ENCODE measurements at regions of chr17 and their contacts with region 1.

Region 1: DNA sequence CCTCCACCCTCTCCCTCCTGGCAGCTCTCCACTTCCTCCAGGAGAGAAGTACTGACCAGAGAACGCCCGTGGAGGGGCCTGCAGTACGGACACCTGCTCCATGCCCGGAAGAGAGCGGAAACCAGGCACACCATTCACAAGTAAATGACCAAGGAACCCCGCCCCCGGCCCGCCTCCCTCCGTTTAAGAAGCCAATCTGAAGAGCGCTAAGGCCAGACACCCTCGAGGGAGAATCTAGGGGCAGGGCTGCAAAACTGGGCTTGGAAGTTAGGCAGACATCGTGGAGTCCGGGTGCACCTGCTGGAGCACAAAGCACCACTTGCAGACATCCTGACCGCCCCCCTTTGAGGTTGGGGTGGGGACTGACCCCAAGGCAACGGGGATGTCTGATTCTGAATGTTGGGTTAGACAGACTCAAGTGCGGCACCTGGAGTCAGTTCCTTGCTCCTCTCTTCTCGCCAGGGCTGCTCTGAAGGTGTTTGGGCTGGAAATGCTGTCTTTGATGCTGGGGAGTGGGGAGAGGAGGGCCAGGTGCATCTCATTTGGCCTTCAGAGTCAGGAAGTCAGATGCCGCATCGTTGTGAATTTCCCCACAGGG is 964 bp upstream of the FAAP100 start:
- DNase-seq: peak; percentile 71 to 87
- H3K4me3 ChIP-seq: peak overlapping the region; percentile 97
- H3K4me3 Mint-ChIP-seq: peak overlapping the region; percentile 90
- H3K27ac Mint-ChIP-seq: peak overlapping the region; percentile 77
- H3K4me1 ChIP-seq: peaks cover 18% of the 10 kb centered on the region
- H3K4me1 Mint-ChIP-seq: peaks cover 10% of the 10 kb centered on the region
- H3K27me3 ChIP-seq: no peaks in the 10 kb centered on the region
- H3K27me3 Mint-ChIP-seq: no peaks in the 10 kb centered on the region
- CTCF ChIP-seq: no peak

Region 2: GRCh38 chr17:81519284-81519955 is 33.7 kb before region 1 on chr17:
- CTCF ChIA-PET with region 1: interaction called, 5 read pairs
- POLR2A ChIA-PET with region 1: interaction called, 4 read pairs
- intact Hi-C with region 1: loop called (anchors 1 kb)
- DNase-seq: peak; percentile 88 to 93
- H3K4me3 ChIP-seq: peak overlapping the region; percentile 74
- H3K4me3 Mint-ChIP-seq: peak overlapping the region; percentile 77
- H3K27ac Mint-ChIP-seq: peak overlapping the region; percentile 74
- H3K4me1 ChIP-seq: peaks cover 33% of the 10 kb centered on the region
- H3K4me1 Mint-ChIP-seq: peaks cover 20% of the 10 kb centered on the region
- H3K27me3 ChIP-seq: no peaks in the 10 kb centered on the region
- H3K27me3 Mint-ChIP-seq: no peaks in the 10 kb centered on the region
- CTCF ChIP-seq: peak; percentile 66 to 92

Region 3: DNA sequence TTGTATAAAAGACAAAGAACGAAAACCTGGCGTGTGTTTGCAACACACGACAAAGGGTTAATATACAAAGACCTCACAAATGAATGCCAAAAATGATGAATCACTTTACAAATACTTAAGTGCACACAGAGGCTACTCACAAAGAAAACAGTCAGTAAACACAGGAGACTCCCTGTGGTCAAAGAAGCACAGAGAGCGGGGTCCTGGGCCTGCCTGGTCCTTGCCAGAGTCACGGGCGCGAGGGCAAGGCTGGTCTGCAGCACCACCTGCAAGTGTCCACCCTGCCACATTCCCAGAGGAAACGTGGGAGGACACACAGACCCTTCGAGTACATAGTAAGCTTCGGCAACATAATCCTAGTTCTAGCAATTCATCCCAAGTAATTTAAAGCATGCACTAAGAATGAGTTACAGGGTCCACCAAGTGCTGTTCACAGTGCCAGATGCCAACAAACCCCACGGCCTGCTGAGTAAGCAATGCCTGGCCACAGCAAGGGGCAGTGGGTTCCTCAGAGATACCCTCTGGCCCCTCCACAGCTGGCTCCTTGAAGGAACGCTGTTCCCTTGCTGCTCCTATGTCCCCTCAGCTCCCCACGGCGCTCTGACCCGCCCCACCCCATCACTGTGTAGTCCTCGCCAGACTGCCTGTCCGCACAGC is 23.6 kb after region 1 on chr17:
- CTCF ChIA-PET with region 1: no interaction called
- POLR2A ChIA-PET with region 1: no interaction called
- intact Hi-C with region 1: loop called (anchors 1 kb)
- DNase-seq: peak in 1 of 2 experiments; percentile 42
- H3K4me3 ChIP-seq: no peak overlapping the region
- H3K4me3 Mint-ChIP-seq: peak overlapping the region; percentile 28
- H3K27ac Mint-ChIP-seq: peak overlapping the region; percentile 66
- H3K4me1 ChIP-seq: peaks cover 25% of the 10 kb centered on the region
- H3K4me1 Mint-ChIP-seq: peaks cover 51% of the 10 kb centered on the region
- H3K27me3 ChIP-seq: no peaks in the 10 kb centered on the region
- H3K27me3 Mint-ChIP-seq: no peaks in the 10 kb centered on the region
- CTCF ChIP-seq: no peak

Region 4: GRCh38 chr17:81601525-81602120 is 48.5 kb after region 1 on chr17:
- CTCF ChIA-PET with region 1: no interaction called
- POLR2A ChIA-PET with region 1: no interaction called
- intact Hi-C with region 1: loop called (anchors 2 kb)
- DNase-seq: peak; percentile 59 to 69
- H3K4me3 ChIP-seq: no peak overlapping the region
- H3K4me3 Mint-ChIP-seq: no peak overlapping the region
- H3K27ac Mint-ChIP-seq: no peak overlapping the region
- H3K4me1 ChIP-seq: no peaks in the 10 kb centered on the region
- H3K4me1 Mint-ChIP-seq: no peaks in the 10 kb centered on the region
- H3K27me3 ChIP-seq: no peaks in the 10 kb centered on the region
- H3K27me3 Mint-ChIP-seq: no peaks in the 10 kb centered on the region
- CTCF ChIP-seq: peak; percentile 78 to 82

Measured in Caco-2 (cell line).